Heart left ventricle (tissue), 16 donors: ENCODE measurements at regions of chr19 and their contacts with region 1.

Region 1: GRCh38 chr19:4400135-4400936 is at the start of gene SH3GL1:
- DNase-seq: peak; percentile 91 to 96 (median 93)
- ATAC-seq: peak; percentile 55 to 77 (median 66)
- H3K4me3 ChIP-seq: peak within 1 kb of the TSS; percentile 75 to 100 (median 94)
- H3K27ac ChIP-seq: peak within 1 kb of the TSS; percentile 81 to 98 (median 96)
- H3K4me1 ChIP-seq: peaks cover 4 to 70% (median 44%) of the 10 kb centered on the region in 12 donors
- H3K27me3 ChIP-seq: no peaks in the 10 kb centered on the region
- CTCF ChIP-seq: peak; percentile 83 to 98 (median 93)
- POLR2A ChIP-seq: peak in 1 of 2 donors; percentile 42
- total RNA-seq, gene SH3GL1: 14.4 to 43.6 (median 22.2) TPM

Region 2: DNA sequence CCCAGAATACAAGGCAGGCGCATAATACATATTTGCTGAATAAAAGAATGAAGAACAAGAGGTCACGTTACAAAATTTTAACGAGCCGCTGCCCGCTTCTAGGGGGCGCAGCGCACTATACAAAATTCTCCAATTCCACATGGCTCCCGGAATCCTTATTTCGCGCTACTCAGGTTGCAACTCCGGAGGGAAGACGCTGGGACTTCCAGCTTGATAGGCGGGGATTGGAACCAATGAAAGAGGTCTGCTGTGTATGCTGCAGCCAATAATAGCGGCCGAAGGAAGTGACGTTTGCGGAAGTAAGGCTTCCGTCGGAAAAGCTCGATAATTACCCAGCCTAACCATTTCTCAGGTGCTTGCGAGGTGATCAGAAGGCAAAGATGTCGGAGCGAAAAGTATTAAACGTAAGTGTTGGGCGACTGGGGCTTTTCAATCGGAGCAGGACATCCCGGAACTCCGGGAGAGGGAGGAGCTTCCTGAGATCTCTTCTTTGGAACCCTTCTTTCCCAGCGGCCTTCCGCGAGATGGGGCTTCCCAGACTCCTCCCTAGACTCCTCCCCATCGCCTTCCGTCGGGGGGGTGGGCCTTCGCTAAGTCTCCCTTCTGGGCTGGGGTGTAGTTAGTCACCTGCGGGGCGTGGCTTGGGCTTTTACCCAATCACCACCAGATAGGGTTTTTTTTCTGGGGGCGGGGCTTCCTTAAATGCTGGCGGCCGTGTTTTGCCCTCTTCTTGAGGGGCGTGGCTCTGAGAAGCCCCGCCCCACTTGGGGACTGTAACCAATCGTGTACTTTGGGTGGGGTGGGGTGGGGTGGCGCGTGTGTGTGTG is 153.4 kb before region 1 on chr19 and contains the start of gene YJU2:
- intact Hi-C with region 1: loop called in 2 of 10 experiments (anchors 2 kb)
- DNase-seq: peak; percentile 98 to 99 (median 99)
- ATAC-seq: peak; percentile 98 to 99 (median 99)
- H3K4me3 ChIP-seq: peak within 1 kb of the TSS; percentile 57 to 95 (median 76)
- H3K27ac ChIP-seq: peak within 1 kb of the TSS; percentile 93 to 99 (median 97)
- H3K4me1 ChIP-seq: peaks cover 0 to 15% (median 7%) of the 10 kb centered on the region in 12 donors
- H3K27me3 ChIP-seq: no peaks in the 10 kb centered on the region
- CTCF ChIP-seq: peak in 11 of 12 donors; percentile 11 to 65 (median 38)
- POLR2A ChIP-seq: peak in 1 of 2 donors; percentile 46
- total RNA-seq, gene YJU2: 7.6 to 19.1 (median 10.4) TPM

Region 3: GRCh38 chr19:4328243-4328990 is 71.9 kb before region 1 on chr19:
- intact Hi-C with region 1: loop called in 1 of 10 experiments (anchors 5 kb)
- DNase-seq: peak; percentile 89 to 98 (median 95)
- ATAC-seq: peak; percentile 94 to 96 (median 96)
- H3K4me3 ChIP-seq: peak overlapping the region in 11 of 12 donors; percentile 13 to 62 (median 53)
- H3K27ac ChIP-seq: peak overlapping the region in 1 of 12 donors; percentile 31
- H3K4me1 ChIP-seq: peaks cover 0 to 24% (median 16%) of the 10 kb centered on the region in 12 donors
- H3K27me3 ChIP-seq: peaks cover 0 to 5% (median 0%) of the 10 kb centered on the region in 9 donors
- CTCF ChIP-seq: no peak
- POLR2A ChIP-seq: peak in 1 of 2 donors; percentile 36

Region 4: DNA sequence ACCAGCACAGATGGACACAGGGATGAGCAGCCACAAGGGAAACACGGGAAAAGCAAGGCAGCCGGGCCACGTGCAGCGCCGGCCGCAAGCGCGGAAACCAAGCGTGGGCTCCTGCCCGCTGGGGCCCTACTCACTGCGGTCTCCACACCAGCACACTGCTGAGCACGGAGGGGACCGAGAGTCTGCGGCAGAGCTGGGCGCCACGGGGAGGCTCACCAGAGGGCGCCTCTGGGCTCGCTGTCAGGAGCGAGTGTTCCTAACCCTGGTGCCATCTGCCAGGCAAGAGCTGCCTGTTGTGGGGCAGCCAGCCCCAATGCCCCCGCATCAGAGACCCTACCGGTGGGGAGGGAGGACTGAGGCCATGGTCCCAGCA is 30.5 kb before region 1 on chr19:
- intact Hi-C with region 1: loop called in 3 of 10 experiments (anchors 1 to 2 kb)
- DNase-seq: peak in 3 of 5 donors; percentile 51 to 83 (median 65)
- ATAC-seq: peak in 2 of 4 donors; percentile 9 to 49
- H3K4me3 ChIP-seq: peak overlapping the region in 9 of 12 donors; percentile 23 to 50 (median 38)
- H3K27ac ChIP-seq: peak overlapping the region in 11 of 12 donors; percentile 58 to 94 (median 76)
- H3K4me1 ChIP-seq: peaks cover 16 to 79% (median 71%) of the 10 kb centered on the region in 12 donors
- H3K27me3 ChIP-seq: no peaks in the 10 kb centered on the region
- CTCF ChIP-seq: peak; percentile 16 to 62 (median 38)
- POLR2A ChIP-seq: no peak

Region 5: DNA sequence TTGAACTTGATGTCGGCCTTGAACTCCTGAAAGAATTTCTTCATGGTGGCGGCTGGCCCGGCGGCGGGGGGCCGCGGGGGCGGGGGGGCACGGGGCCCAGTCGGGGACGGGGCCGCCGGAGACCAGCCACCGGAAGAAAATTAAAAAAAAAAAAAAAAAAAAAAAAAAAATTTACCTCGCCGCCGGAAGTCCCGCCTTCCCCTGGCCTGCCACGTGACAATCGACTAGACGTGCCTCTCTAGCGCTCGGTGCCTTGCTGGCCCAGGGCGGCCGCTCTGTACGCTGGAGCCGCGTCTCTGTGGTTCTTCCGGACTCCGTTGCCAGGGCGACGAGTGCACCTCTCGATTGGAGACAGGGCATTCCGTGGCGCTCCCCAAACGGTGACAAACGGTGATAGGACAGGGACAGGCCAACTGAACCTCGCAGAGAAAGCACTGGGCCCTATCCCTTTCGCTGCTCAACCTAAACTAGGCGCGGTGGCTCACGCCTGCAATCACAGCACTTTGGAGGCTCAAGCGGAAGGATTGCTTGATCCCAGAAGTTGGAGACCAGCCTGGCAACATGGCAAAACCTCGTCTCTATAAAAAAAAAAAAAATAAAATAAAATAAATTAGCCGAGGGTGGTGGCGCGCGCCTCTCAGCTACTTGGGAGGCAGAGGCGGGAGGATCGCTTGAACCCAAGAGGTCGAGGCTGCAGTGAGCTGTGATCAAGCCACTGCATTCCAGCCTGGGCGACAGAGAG is 57.5 kb after region 1 on chr19 and contains the start of gene UBXN6:
- intact Hi-C with region 1: loop called in 2 of 10 experiments (anchors 2 to 10 kb)
- DNase-seq: peak; percentile 97 to 100 (median 98)
- ATAC-seq: peak; percentile 85 to 93 (median 90)
- H3K4me3 ChIP-seq: peak within 1 kb of the TSS; percentile 53 to 96 (median 70)
- H3K27ac ChIP-seq: peak within 1 kb of the TSS; percentile 30 to 96 (median 89)
- H3K4me1 ChIP-seq: peaks cover 0 to 33% (median 20%) of the 10 kb centered on the region in 12 donors
- H3K27me3 ChIP-seq: no peaks in the 10 kb centered on the region
- CTCF ChIP-seq: peak in 2 of 12 donors; percentile 9 to 13
- POLR2A ChIP-seq: no peak
- total RNA-seq, gene UBXN6: 75.1 to 128 (median 109) TPM

Region 6: GRCh38 chr19:4518345-4519171 is 118.2 kb after region 1 on chr19 and contains the start of gene PLIN4:
- intact Hi-C with region 1: no loop called
- DNase-seq: peak; percentile 84 to 92 (median 88)
- ATAC-seq: peak; percentile 83 to 87 (median 84)
- H3K4me3 ChIP-seq: peak within 1 kb of the TSS; percentile 35 to 75 (median 56)
- H3K27ac ChIP-seq: peak within 1 kb of the TSS; percentile 76 to 99 (median 91)
- H3K4me1 ChIP-seq: peaks cover 0 to 40% (median 15%) of the 10 kb centered on the region in 12 donors
- H3K27me3 ChIP-seq: no peaks in the 10 kb centered on the region
- CTCF ChIP-seq: no peak
- POLR2A ChIP-seq: peak; percentile 40 to 96
- total RNA-seq, gene PLIN4: 110 to 292 (median 174) TPM